Gastrocnemius medialis (tissue), 4 donors: ENCODE measurements at regions of chr5 and their contacts with region 1.

Region 1: GRCh38 chr5:112146323-112147226 is 272.5 kb downstream of the EPB41L4A start:
- DNase-seq: peak; percentile 38 to 62
- ATAC-seq: peak; percentile 89 to 90
- H3K4me3 ChIP-seq: no peak overlapping the region
- H3K27ac ChIP-seq: peak overlapping the region; percentile 45 to 80 (median 74)
- H3K4me1 ChIP-seq: peaks cover 17 to 20% of the 10 kb centered on the region in 2 donors
- H3K27me3 ChIP-seq: no peaks in the 10 kb centered on the region
- CTCF ChIP-seq: peak; percentile 82 to 90 (median 87)
- POLR2A ChIP-seq: no peak

Region 2: DNA sequence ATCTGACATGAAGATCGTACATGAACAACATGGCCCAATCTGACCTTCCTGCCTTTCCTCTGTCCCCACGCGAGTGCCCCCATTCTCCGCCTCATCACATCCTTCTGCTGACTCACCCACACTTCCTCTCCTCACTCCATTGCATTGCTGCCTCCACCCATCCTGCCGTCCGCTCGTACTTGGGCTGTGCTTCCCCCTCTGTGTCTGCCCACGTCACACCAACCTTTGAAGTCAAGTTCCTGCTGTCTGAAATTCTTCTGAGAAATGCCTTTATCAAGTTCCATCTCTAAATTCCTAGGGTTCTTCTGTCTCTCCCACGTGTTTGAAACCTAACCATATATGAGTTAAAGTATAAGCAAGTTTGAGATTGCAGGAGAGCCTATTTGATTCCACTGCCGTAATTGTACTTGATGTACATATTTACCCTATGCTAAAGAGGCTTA is 616.3 kb before region 1 on chr5:
- in situ Hi-C with region 1: no loop called
- intact Hi-C with region 1: loop called (anchors 5 kb)
- DNase-seq: peak; percentile 44 to 58
- ATAC-seq: peak; percentile 65
- H3K4me3 ChIP-seq: no peak overlapping the region
- H3K27ac ChIP-seq: peak overlapping the region in 3 of 4 donors; percentile 44 to 54 (median 46)
- H3K4me1 ChIP-seq: no peaks in the 10 kb centered on the region
- H3K27me3 ChIP-seq: no peaks in the 10 kb centered on the region
- CTCF ChIP-seq: no peak
- POLR2A ChIP-seq: no peak

Region 3: DNA sequence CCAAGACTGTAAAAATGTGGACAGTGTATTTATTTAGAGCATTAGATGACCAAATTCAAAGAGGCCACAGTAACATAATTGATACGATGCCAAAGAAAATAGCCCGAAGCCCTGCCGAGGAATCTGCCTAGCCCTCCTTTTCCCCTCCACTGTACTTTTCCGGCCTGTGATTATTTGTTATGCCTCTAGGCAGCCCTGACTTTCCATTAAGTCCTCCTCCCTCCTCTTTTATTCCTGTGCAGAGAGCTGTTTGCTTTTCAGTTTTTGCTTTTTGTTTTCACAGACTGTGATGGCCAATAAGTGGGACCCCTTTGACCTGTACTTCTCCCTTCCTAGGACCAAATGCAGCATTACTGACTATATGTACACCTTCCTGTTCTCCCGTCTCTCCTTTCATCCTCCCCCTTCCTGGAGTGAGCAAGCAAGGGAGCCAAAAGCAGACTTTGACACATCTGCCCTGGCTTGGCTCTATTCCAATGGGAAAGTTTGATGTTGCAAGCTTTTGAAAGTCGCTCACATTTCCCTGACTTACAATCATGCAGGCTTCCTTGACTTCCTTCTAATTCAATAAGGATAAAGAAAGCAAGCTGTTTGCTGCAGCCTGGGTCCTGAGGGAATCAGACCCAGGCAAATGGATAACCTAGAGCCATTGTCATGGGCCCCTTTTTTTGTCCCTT is 465.7 kb before region 1 on chr5:
- in situ Hi-C with region 1: no loop called
- intact Hi-C with region 1: loop called (anchors 10 kb)
- DNase-seq: peak; percentile 65
- ATAC-seq: peak; percentile 95 to 98
- H3K4me3 ChIP-seq: peak overlapping the region in 1 of 4 donors; percentile 10
- H3K27ac ChIP-seq: peak overlapping the region in 3 of 4 donors; percentile 6 to 47 (median 10)
- H3K4me1 ChIP-seq: peaks cover 13 to 16% of the 10 kb centered on the region in 2 donors
- H3K27me3 ChIP-seq: no peaks in the 10 kb centered on the region
- CTCF ChIP-seq: no peak
- POLR2A ChIP-seq: no peak

Region 4: DNA sequence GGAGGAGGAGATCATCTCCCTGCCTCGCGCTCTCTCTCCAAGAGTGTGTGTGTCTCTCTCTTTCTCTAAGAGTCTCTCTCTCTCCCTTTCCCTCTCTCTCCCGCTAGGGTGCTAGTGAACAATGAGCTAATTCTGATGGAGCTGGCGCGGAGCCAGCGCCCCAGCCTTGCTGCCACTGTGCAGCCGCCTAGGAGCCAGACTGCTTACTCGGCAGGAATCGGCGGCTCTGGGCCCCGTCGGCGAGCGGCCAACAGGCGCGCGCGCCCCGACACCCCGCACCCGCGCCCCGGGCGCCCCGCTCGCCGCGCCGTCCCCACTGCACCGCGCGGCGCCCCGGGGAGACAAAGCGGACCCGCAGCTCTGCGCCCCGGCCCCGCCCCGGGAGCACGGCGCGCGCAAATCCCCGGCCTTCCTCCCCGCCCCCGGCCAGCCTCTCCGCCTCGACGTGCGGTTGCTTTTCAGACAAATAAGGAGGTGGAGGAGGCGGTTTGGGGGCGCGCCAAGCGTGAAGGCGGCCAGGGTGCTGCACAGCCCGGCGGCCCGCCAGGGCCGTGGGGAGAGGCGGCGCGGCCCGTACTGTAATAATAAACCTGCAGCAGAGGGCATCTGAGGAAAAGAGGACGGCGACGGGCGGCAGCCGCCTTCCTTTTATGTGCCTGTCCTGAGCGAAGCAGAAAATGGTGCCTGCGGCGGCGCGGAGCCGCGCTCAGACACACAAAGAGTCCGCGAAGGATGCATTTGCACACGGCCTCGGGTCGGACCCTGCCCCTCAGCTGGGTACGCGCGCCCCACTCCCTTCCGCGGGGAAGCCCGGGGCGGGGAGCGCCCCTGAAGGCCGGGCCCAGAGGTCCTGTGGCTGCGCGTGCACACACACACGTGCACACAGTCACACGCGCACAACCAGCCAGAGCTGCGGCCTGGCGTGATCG is 389.0 kb before region 1 on chr5:
- in situ Hi-C with region 1: loop called in 3 of 4 experiments (anchors 5 to 10 kb)
- intact Hi-C with region 1: loop called (anchors 2 kb)
- DNase-seq: peak; percentile 90 to 95
- ATAC-seq: peak; percentile 72 to 76
- H3K4me3 ChIP-seq: peak overlapping the region; percentile 49 to 75 (median 64)
- H3K27ac ChIP-seq: peak overlapping the region; percentile 74 to 94 (median 90)
- H3K4me1 ChIP-seq: peaks cover 37 to 43% of the 10 kb centered on the region in 2 donors
- H3K27me3 ChIP-seq: no peaks in the 10 kb centered on the region
- CTCF ChIP-seq: peak; percentile 16 to 39 (median 30)
- POLR2A ChIP-seq: peak; percentile 56 to 82